ENCODE measurements at regions of chr7 and their contacts with region 1.

Region 1: GRCh38 chr7:55572378-55573233 is at the start of gene VOPP1:
- DNase-seq: peak in 33 of 35 experiments; percentile 12 to 84 (median 41)
- ATAC-seq: peak; percentile 66 to 72 (median 69)
- H3K4me3 ChIP-seq: peak within 1 kb of the TSS; percentile 75 to 79
- H3K4me3 Mint-ChIP-seq: peak within 1 kb of the TSS; percentile 93 to 95 (median 93)
- H3K27ac ChIP-seq: peak within 1 kb of the TSS; percentile 85
- H3K27ac Mint-ChIP-seq: peak within 1 kb of the TSS; percentile 93 to 94
- H3K4me1 ChIP-seq: peaks cover 30 to 57% of the 10 kb centered on the region in 2 experiments
- H3K4me1 Mint-ChIP-seq: peaks cover 57 to 63% (median 62%) of the 10 kb centered on the region in 3 donors
- H3K27me3 ChIP-seq: no peaks in the 10 kb centered on the region
- H3K27me3 Mint-ChIP-seq: no peaks in the 10 kb centered on the region
- total RNA-seq, gene VOPP1: 84.0 to 106 (median 94.8) TPM

Region 2: GRCh38 chr7:55271069-55271626 is 301.5 kb before region 1 on chr7:
- CTCF ChIA-PET with region 1: no interaction called
- POLR2A ChIA-PET with region 1: no interaction called
- DNase-seq: no peak
- ATAC-seq: no peak
- H3K4me3 ChIP-seq: no peak overlapping the region
- H3K4me3 Mint-ChIP-seq: no peak overlapping the region
- H3K27ac ChIP-seq: no peak overlapping the region
- H3K27ac Mint-ChIP-seq: no peak overlapping the region
- H3K4me1 ChIP-seq: no peaks in the 10 kb centered on the region
- H3K4me1 Mint-ChIP-seq: no peaks in the 10 kb centered on the region
- H3K27me3 ChIP-seq: peaks cover 0 to 29% of the 10 kb centered on the region in 2 experiments
- H3K27me3 Mint-ChIP-seq: peaks cover 0 to 6% of the 10 kb centered on the region in 2 donors

Region 3: GRCh38 chr7:55360486-55360885 is 212.1 kb before region 1 on chr7:
- CTCF ChIA-PET with region 1: interaction called in 1 of 2 experiments, 19 read pairs
- POLR2A ChIA-PET with region 1: no interaction called
- DNase-seq: no peak
- ATAC-seq: no peak
- H3K4me3 ChIP-seq: no peak overlapping the region
- H3K4me3 Mint-ChIP-seq: no peak overlapping the region
- H3K27ac ChIP-seq: no peak overlapping the region
- H3K27ac Mint-ChIP-seq: no peak overlapping the region
- H3K4me1 ChIP-seq: peaks cover 4 to 6% of the 10 kb centered on the region in 2 experiments
- H3K4me1 Mint-ChIP-seq: peaks cover 8 to 9% (median 8%) of the 10 kb centered on the region in 3 donors
- H3K27me3 ChIP-seq: peaks cover 4 to 5% of the 10 kb centered on the region in 2 experiments
- H3K27me3 Mint-ChIP-seq: peaks cover 6 to 11% of the 10 kb centered on the region in 2 donors